ENCODE measurements at regions of chr3 and their contacts with region 1.

Region 1: GRCh38 chr3:45656575-45657363 is 32.4 kb upstream of the SACM1L start:
- DNase-seq: peak; percentile 89
- ATAC-seq: peak; percentile 90
- H3K4me3 ChIP-seq: no peak overlapping the region
- H3K27ac ChIP-seq: no peak overlapping the region
- H3K4me1 ChIP-seq: peaks cover 0 to 15% of the 10 kb centered on the region in 2 experiments; a peak in 1 of 4 replicates
- H3K27me3 ChIP-seq: no peaks in the 10 kb centered on the region
- CTCF ChIP-seq: peak; percentile 86 to 93 (median 91)
- POLR2A ChIP-seq: no peak
- RAD21 ChIP-seq: peak; percentile 95

Region 2: GRCh38 chr3:45546716-45547701 is 109.8 kb before region 1 on chr3:
- CTCF ChIA-PET with region 1: interaction called, 16 read pairs
- POLR2A ChIA-PET with region 1: no interaction called
- RAD21 ChIA-PET with region 1: no interaction called
- intact Hi-C with region 1: no loop called
- DNase-seq: peak; percentile 13
- ATAC-seq: peak; percentile 41; the same call in 1 of the 2 replicates
- H3K4me3 ChIP-seq: no peak overlapping the region
- H3K27ac ChIP-seq: no peak overlapping the region
- H3K4me1 ChIP-seq: peaks cover 11 to 37% of the 10 kb centered on the region in 2 experiments
- H3K27me3 ChIP-seq: no peaks in the 10 kb centered on the region
- CTCF ChIP-seq: peak; percentile 49 to 83 (median 80); a peak in 5 of 6 replicates
- POLR2A ChIP-seq: no peak
- RAD21 ChIP-seq: peak; percentile 49

Region 3: GRCh38 chr3:45670991-45671390 is 14.2 kb after region 1 on chr3:
- CTCF ChIA-PET with region 1: interaction called, 13 read pairs
- POLR2A ChIA-PET with region 1: no interaction called
- RAD21 ChIA-PET with region 1: no interaction called
- intact Hi-C with region 1: no loop called
- DNase-seq: no peak
- ATAC-seq: no peak
- H3K4me3 ChIP-seq: no peak overlapping the region
- H3K27ac ChIP-seq: no peak overlapping the region
- H3K4me1 ChIP-seq: peaks cover 0 to 6% of the 10 kb centered on the region in 2 experiments; a peak in 1 of 4 replicates
- H3K27me3 ChIP-seq: no peaks in the 10 kb centered on the region
- CTCF ChIP-seq: no peak
- POLR2A ChIP-seq: no peak
- RAD21 ChIP-seq: no peak